PC-9 (cell line): ENCODE measurements at regions of chr3 and their contacts with region 1.

Region 1: GRCh38 chr3:23888617-23889228 is 28.1 kb downstream of the NKIRAS1 start:
- DNase-seq: no peak
- H3K4me3 ChIP-seq: no peak overlapping the region
- H3K27ac ChIP-seq: peak overlapping the region; percentile 57
- H3K4me1 ChIP-seq: peaks cover 28% of the 10 kb centered on the region
- H3K27me3 ChIP-seq: no peaks in the 10 kb centered on the region
- CTCF ChIP-seq: peak; percentile 92

Region 2: DNA sequence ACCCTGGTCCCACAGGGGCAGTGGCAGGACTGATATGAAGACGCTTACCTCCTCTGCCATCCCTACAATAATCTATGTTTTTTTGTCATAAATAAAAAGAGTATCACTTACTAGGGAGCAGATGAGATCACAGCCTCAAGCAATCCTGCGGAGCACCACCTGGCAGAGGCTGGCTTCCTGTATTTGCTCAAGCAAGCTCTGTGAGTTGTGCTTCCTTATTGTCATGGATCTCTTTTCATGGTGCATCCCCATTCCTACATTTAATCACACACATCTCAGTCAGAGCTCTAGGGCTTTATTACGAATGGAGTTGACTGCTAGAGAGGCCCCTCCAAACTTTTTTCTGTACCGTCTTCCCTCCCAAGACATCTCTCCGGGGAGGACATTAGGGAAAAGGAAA is 499.6 kb before region 1 on chr3:
- CTCF ChIA-PET with region 1: no interaction called
- POLR2A ChIA-PET with region 1: no interaction called
- intact Hi-C with region 1: no loop called
- DNase-seq: no peak
- H3K4me3 ChIP-seq: no peak overlapping the region
- H3K27ac ChIP-seq: no peak overlapping the region
- H3K4me1 ChIP-seq: no peaks in the 10 kb centered on the region
- H3K27me3 ChIP-seq: no peaks in the 10 kb centered on the region
- CTCF ChIP-seq: no peak

Region 3: GRCh38 chr3:23900744-23901143 is 12.0 kb after region 1 on chr3:
- CTCF ChIA-PET with region 1: interaction called, 12 read pairs
- POLR2A ChIA-PET with region 1: no interaction called
- intact Hi-C with region 1: no loop called
- DNase-seq: no peak
- H3K4me3 ChIP-seq: no peak overlapping the region
- H3K27ac ChIP-seq: no peak overlapping the region
- H3K4me1 ChIP-seq: no peaks in the 10 kb centered on the region; the same call in 1 of the 2 replicates
- H3K27me3 ChIP-seq: no peaks in the 10 kb centered on the region
- CTCF ChIP-seq: no peak

Region 4: GRCh38 chr3:23938688-23939087 is 50.0 kb after region 1 on chr3:
- CTCF ChIA-PET with region 1: no interaction called
- POLR2A ChIA-PET with region 1: interaction called, 11 read pairs
- intact Hi-C with region 1: no loop called
- DNase-seq: no peak
- H3K4me3 ChIP-seq: no peak overlapping the region
- H3K27ac ChIP-seq: no peak overlapping the region
- H3K4me1 ChIP-seq: no peaks in the 10 kb centered on the region
- H3K27me3 ChIP-seq: no peaks in the 10 kb centered on the region
- CTCF ChIP-seq: no peak

Region 5: GRCh38 chr3:23959135-23959900 is 70.6 kb after region 1 on chr3:
- CTCF ChIA-PET with region 1: no interaction called
- POLR2A ChIA-PET with region 1: no interaction called
- intact Hi-C with region 1: loop called (anchors 2 kb)
- DNase-seq: peak; percentile 65 to 97
- H3K4me3 ChIP-seq: no peak overlapping the region
- H3K27ac ChIP-seq: peak overlapping the region; percentile 94
- H3K4me1 ChIP-seq: peaks cover 49% of the 10 kb centered on the region
- H3K27me3 ChIP-seq: no peaks in the 10 kb centered on the region
- CTCF ChIP-seq: no peak

Region 6: GRCh38 chr3:24069045-24069444 is 180.3 kb after region 1 on chr3:
- CTCF ChIA-PET with region 1: no interaction called
- POLR2A ChIA-PET with region 1: no interaction called
- intact Hi-C with region 1: loop called (anchors 5 kb)
- DNase-seq: peak in 1 of 2 experiments; percentile 17
- H3K4me3 ChIP-seq: no peak overlapping the region
- H3K27ac ChIP-seq: no peak overlapping the region
- H3K4me1 ChIP-seq: no peaks in the 10 kb centered on the region
- H3K27me3 ChIP-seq: no peaks in the 10 kb centered on the region
- CTCF ChIP-seq: peak; percentile 57